Heart right ventricle (tissue), 16 donors: ENCODE measurements at regions of chr1 and their contacts with region 1.

Region 1: GRCh38 chr1:192108161-192108560 is 50.1 kb upstream of the RGS18 start:
- DNase-seq: no peak
- ATAC-seq: no peak
- H3K4me3 ChIP-seq: no peak overlapping the region
- H3K27ac ChIP-seq: no peak overlapping the region
- H3K4me1 ChIP-seq: no peaks in the 10 kb centered on the region
- H3K27me3 ChIP-seq: no peaks in the 10 kb centered on the region
- CTCF ChIP-seq: no peak

Region 2: DNA sequence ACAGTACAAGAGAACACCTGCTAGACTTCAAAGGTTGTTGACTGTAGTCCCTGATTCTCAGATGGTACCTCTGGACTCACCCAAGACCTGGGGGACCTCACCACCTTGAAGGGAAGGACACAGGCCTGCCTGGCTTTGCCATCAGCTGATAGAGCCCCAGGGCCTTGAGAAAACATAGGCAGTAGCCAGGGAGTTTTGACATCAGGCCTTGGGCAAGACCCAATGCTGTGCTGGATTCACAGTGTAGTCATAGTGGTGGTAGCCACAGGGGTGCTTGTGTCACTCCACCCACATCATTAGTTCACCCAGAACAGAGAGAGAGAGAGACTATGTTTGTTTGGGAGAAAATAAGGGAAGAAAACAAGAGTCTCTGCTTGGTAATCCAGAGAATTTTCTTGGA is 247.3 kb before region 1 on chr1:
- intact Hi-C with region 1: no loop called
- DNase-seq: no peak
- ATAC-seq: no peak
- H3K4me3 ChIP-seq: no peak overlapping the region
- H3K27ac ChIP-seq: no peak overlapping the region
- H3K4me1 ChIP-seq: no peaks in the 10 kb centered on the region
- H3K27me3 ChIP-seq: no peaks in the 10 kb centered on the region
- CTCF ChIP-seq: no peak

Region 3: GRCh38 chr1:192061556-192061955 is 46.6 kb before region 1 on chr1:
- intact Hi-C with region 1: no loop called
- DNase-seq: no peak
- ATAC-seq: no peak
- H3K4me3 ChIP-seq: no peak overlapping the region
- H3K27ac ChIP-seq: no peak overlapping the region
- H3K4me1 ChIP-seq: no peaks in the 10 kb centered on the region
- H3K27me3 ChIP-seq: no peaks in the 10 kb centered on the region
- CTCF ChIP-seq: no peak

Region 4: DNA sequence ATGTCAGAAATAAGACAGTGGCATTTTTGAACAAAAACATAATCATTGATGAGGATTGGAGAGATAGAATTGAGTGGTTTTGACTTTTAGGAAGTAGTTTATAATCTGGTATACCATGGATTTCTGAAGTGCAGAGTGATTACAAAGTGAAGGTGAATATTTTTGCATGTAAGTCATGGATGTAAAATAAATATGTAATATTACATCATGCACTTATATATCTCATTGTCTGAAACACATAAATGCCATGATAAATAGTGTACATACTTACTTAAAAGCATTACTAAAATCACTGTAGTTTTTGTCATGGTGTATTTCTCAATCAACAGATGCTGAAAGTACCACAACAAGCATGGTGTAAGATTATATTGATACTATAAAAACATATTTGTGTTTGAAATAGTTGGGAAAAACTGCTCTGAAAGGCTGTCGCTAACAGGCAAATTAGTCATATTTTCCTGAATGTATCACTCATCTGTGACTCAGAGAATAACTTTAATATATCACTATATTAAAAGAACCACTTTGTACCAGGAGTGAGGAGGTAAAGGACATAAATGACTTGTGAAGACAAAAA is 25.3 kb after region 1 on chr1:
- intact Hi-C with region 1: loop called in 1 of 10 experiments (anchors 2 kb)
- DNase-seq: no peak
- ATAC-seq: no peak
- H3K4me3 ChIP-seq: no peak overlapping the region
- H3K27ac ChIP-seq: no peak overlapping the region
- H3K4me1 ChIP-seq: no peaks in the 10 kb centered on the region
- H3K27me3 ChIP-seq: no peaks in the 10 kb centered on the region
- CTCF ChIP-seq: no peak